Thyroid gland (tissue), 4 donors: ENCODE measurements at regions of chr1 and their contacts with region 1.

Region 1: GRCh38 chr1:26602378-26602959 is 72.9 kb downstream of the RPS6KA1 start:
- DNase-seq: peak; percentile 20 to 24
- H3K4me3 ChIP-seq: no peak overlapping the region
- H3K27ac ChIP-seq: no peak overlapping the region
- H3K4me1 ChIP-seq: peaks cover 0 to 6% of the 10 kb centered on the region in 2 donors
- H3K27me3 ChIP-seq: no peaks in the 10 kb centered on the region
- CTCF ChIP-seq: peak; percentile 45 to 98 (median 88)
- POLR2A ChIP-seq: no peak

Region 2: GRCh38 chr1:26677306-26678115 is 75.0 kb after region 1 on chr1:
- intact Hi-C with region 1: loop called (anchors 5 kb)
- DNase-seq: peak; percentile 97 to 99
- H3K4me3 ChIP-seq: no peak overlapping the region
- H3K27ac ChIP-seq: peak overlapping the region; percentile 26 to 68 (median 56)
- H3K4me1 ChIP-seq: peaks cover 5 to 16% of the 10 kb centered on the region in 2 donors
- H3K27me3 ChIP-seq: no peaks in the 10 kb centered on the region
- CTCF ChIP-seq: peak; percentile 43 to 97 (median 85)
- POLR2A ChIP-seq: no peak

Region 3: DNA sequence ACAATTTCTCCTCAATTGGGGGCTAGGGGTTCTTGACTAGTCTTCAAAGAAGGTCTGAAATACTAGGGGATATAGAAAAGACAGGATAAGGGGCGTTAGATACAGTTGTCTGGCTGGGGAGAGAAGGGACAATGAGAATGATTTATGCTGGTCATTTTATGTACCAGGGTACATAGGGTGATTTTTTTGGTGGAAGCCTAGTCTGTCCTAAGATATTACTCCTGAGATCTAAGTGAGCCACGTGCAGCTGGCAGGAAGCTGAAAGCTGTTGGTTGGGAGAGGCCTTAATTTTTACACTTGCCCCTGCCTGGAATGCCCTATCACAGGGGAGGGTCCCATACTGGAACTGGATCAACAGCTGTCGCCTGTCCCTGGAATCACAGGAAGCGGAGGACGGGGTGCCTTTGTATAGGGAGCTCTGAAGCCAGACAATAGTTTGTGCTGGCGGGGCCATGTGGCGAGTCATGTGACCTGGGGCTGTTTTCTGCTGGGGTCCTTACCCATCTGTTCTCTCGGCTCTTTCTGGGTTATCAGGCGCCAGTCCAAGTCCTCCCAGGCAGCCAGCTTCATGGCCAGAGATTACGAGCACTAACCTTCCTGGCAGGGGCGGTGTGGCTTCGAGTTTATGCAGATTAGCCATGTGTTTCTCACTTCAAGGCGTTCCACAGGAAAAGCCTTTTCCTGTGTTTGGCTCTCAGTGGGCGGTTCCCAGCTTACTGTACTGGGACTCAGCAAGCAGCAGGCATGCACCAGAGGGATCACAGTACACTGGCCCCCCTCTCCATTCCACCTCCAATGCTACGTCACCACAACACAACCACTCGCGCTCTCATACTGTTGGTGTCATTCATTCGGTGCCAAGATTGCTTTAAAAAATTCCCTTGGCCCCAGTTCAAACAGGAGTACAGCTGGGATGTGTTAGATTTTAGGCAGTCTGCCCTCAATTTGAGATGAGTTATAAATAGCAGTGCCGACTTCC is 120.8 kb after region 1 on chr1:
- intact Hi-C with region 1: no loop called
- DNase-seq: peak; percentile 90 to 91
- H3K4me3 ChIP-seq: no peak overlapping the region
- H3K27ac ChIP-seq: peak overlapping the region in 2 of 3 donors; percentile 43 to 50
- H3K4me1 ChIP-seq: peaks cover 49 to 61% of the 10 kb centered on the region in 2 donors
- H3K27me3 ChIP-seq: no peaks in the 10 kb centered on the region
- CTCF ChIP-seq: no peak
- POLR2A ChIP-seq: no peak

Region 4: GRCh38 chr1:26874896-26875295 is 272.4 kb after region 1 on chr1:
- intact Hi-C with region 1: loop called (anchors 5 kb)
- DNase-seq: no peak
- H3K4me3 ChIP-seq: no peak overlapping the region
- H3K27ac ChIP-seq: no peak overlapping the region
- H3K4me1 ChIP-seq: no peaks in the 10 kb centered on the region
- H3K27me3 ChIP-seq: no peaks in the 10 kb centered on the region
- CTCF ChIP-seq: no peak
- POLR2A ChIP-seq: no peak